Heart left ventricle (tissue), 16 donors: ENCODE measurements at regions of chr10 and their contacts with region 1.

Region 1: DNA sequence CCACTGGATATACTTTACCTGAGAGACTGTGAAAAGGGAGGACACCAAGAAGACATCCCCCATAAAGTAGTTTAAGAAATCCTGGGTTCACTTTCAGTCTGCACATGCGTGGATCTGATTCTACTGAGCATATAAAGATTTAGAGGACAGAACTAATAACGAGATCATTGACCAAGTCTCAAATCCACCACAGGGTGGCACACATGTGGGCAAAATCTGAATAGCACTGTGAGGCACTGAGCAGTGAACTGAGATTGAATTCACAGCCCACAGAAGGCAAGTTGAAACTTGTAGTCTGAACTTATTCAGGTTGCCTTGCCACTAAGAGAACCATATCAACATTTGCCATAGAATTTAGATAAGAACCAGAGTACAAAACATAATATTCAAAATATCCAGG is 818.6 kb downstream of the GRID1 start:
- DNase-seq: no peak
- ATAC-seq: peak in 3 of 4 donors; percentile 28 to 59 (median 54)
- H3K4me3 ChIP-seq: no peak overlapping the region
- H3K27ac ChIP-seq: no peak overlapping the region
- H3K4me1 ChIP-seq: no peaks in the 10 kb centered on the region
- H3K27me3 ChIP-seq: peaks cover 0 to 4% (median 0%) of the 10 kb centered on the region in 9 donors
- CTCF ChIP-seq: peak in 11 of 12 donors; percentile 19 to 52 (median 35)
- POLR2A ChIP-seq: no peak

Region 2: GRCh38 chr10:85407088-85407487 is 140.9 kb before region 1 on chr10:
- intact Hi-C with region 1: no loop called
- DNase-seq: no peak
- ATAC-seq: no peak
- H3K4me3 ChIP-seq: no peak overlapping the region
- H3K27ac ChIP-seq: no peak overlapping the region
- H3K4me1 ChIP-seq: no peaks in the 10 kb centered on the region
- H3K27me3 ChIP-seq: no peaks in the 10 kb centered on the region
- CTCF ChIP-seq: no peak
- POLR2A ChIP-seq: no peak

Region 3: DNA sequence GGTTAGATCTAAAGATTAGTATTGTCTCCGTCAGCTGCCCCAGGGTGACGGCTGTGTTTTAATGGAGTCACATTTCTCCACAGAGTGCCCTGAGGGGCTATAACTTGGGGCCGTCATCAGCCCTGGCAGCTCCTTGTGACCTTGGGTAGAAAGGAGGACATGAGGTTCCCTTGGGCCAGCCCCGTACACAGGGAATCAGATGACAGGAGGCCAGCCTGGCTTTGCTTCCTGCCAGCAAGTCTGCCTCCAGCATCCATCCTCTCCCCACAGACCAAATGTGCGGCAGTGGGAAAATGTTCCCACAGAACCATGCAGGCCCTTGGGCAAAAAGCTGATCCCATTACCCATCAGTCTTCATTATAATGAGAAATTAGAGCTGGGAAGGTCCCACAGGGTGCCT is 89.8 kb before region 1 on chr10:
- intact Hi-C with region 1: no loop called
- DNase-seq: no peak
- ATAC-seq: no peak
- H3K4me3 ChIP-seq: no peak overlapping the region
- H3K27ac ChIP-seq: no peak overlapping the region
- H3K4me1 ChIP-seq: no peaks in the 10 kb centered on the region
- H3K27me3 ChIP-seq: no peaks in the 10 kb centered on the region
- CTCF ChIP-seq: no peak
- POLR2A ChIP-seq: no peak

Region 4: GRCh38 chr10:85786401-85786899 is 238.4 kb after region 1 on chr10:
- intact Hi-C with region 1: loop called in 1 of 10 experiments (anchors 10 kb)
- DNase-seq: peak in 1 of 5 donors; percentile 41
- ATAC-seq: peak in 3 of 4 donors; percentile 65 to 80 (median 67)
- H3K4me3 ChIP-seq: no peak overlapping the region
- H3K27ac ChIP-seq: no peak overlapping the region
- H3K4me1 ChIP-seq: peaks cover 0 to 5% (median 0%) of the 10 kb centered on the region in 12 donors
- H3K27me3 ChIP-seq: no peaks in the 10 kb centered on the region
- CTCF ChIP-seq: peak; percentile 15 to 59 (median 36)
- POLR2A ChIP-seq: no peak

Region 5: GRCh38 chr10:86061278-86062197 is 513.5 kb after region 1 on chr10:
- intact Hi-C with region 1: loop called in 1 of 10 experiments (anchors 5 kb)
- DNase-seq: no peak
- ATAC-seq: no peak
- H3K4me3 ChIP-seq: no peak overlapping the region
- H3K27ac ChIP-seq: no peak overlapping the region
- H3K4me1 ChIP-seq: peaks cover 0 to 11% (median 0%) of the 10 kb centered on the region in 12 donors
- H3K27me3 ChIP-seq: peaks cover 0 to 5% (median 0%) of the 10 kb centered on the region in 9 donors
- CTCF ChIP-seq: no peak
- POLR2A ChIP-seq: no peak